Heart left ventricle (tissue), 16 donors: ENCODE measurements at regions of chr21 and their contacts with region 1.

Region 1: DNA sequence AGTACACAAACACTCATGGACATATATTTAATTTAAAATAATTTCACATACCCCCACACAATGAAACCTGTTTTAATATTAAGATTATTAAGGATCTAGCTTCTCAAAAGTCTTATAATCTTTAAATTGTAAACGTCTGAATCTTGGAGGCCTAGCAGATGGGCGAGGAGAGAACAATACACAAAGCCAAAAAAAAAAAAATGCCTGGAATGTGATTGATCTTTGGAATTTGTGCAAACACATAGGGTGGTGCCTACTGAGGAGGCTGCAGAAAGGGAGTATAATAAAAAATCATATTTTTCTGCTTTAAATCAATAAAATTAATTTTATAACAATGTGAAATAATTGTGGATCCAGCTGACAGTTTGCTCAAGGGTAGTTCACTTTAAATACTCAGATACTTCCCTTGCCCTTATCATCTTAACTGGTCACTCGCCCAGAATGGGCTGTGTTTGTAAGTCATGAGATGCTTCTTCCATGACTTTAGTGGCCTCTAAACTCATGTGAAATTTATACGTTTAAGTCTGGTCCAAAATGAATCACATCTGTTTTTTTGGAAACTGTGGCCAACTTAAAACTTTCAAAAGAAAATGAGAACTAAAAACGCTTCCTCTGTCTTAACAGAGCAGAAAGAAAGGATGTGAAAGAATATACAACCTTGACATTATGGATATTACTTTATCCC is 802.8 kb upstream of the CXADR start:
- DNase-seq: peak in 1 of 5 donors; percentile 20
- ATAC-seq: peak in 2 of 4 donors; percentile 64 to 69
- H3K4me3 ChIP-seq: no peak overlapping the region
- H3K27ac ChIP-seq: peak overlapping the region in 5 of 12 donors; percentile 15 to 33 (median 18)
- H3K4me1 ChIP-seq: peaks cover 0 to 11% (median 0%) of the 10 kb centered on the region in 12 donors
- H3K27me3 ChIP-seq: no peaks in the 10 kb centered on the region
- CTCF ChIP-seq: no peak
- POLR2A ChIP-seq: no peak

Region 2: DNA sequence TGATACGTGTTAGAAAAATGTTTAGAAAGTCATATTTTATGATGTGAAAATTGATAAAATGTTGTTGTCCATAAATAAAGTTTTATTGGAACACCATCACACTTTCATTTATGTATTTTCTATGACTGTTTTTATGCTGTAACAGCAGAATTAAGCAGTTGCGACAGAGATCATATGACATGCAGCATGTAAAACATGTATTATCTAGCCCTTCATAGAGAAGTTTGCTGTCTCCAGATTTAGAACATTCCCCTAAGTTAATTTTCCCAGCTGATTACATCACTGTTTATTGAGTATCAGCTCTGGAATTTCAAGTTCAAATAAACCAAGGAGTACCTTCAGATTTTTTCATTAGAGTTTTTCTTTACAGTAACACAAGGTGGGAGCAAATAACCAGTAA is 187.5 kb before region 1 on chr21:
- intact Hi-C with region 1: no loop called
- DNase-seq: no peak
- ATAC-seq: no peak
- H3K4me3 ChIP-seq: no peak overlapping the region
- H3K27ac ChIP-seq: no peak overlapping the region
- H3K4me1 ChIP-seq: peaks cover 0 to 22% (median 0%) of the 10 kb centered on the region in 12 donors
- H3K27me3 ChIP-seq: no peaks in the 10 kb centered on the region
- CTCF ChIP-seq: no peak
- POLR2A ChIP-seq: no peak

Region 3: GRCh38 chr21:16650714-16651366 is 59.2 kb before region 1 on chr21:
- intact Hi-C with region 1: loop called in 1 of 10 experiments (anchors 10 kb)
- DNase-seq: no peak
- ATAC-seq: no peak
- H3K4me3 ChIP-seq: no peak overlapping the region
- H3K27ac ChIP-seq: no peak overlapping the region
- H3K4me1 ChIP-seq: no peaks in the 10 kb centered on the region
- H3K27me3 ChIP-seq: no peaks in the 10 kb centered on the region
- CTCF ChIP-seq: no peak
- POLR2A ChIP-seq: no peak